MCF 10A (cell line): ENCODE measurements at regions of chr5 and their contacts with region 1.

Region 1: DNA sequence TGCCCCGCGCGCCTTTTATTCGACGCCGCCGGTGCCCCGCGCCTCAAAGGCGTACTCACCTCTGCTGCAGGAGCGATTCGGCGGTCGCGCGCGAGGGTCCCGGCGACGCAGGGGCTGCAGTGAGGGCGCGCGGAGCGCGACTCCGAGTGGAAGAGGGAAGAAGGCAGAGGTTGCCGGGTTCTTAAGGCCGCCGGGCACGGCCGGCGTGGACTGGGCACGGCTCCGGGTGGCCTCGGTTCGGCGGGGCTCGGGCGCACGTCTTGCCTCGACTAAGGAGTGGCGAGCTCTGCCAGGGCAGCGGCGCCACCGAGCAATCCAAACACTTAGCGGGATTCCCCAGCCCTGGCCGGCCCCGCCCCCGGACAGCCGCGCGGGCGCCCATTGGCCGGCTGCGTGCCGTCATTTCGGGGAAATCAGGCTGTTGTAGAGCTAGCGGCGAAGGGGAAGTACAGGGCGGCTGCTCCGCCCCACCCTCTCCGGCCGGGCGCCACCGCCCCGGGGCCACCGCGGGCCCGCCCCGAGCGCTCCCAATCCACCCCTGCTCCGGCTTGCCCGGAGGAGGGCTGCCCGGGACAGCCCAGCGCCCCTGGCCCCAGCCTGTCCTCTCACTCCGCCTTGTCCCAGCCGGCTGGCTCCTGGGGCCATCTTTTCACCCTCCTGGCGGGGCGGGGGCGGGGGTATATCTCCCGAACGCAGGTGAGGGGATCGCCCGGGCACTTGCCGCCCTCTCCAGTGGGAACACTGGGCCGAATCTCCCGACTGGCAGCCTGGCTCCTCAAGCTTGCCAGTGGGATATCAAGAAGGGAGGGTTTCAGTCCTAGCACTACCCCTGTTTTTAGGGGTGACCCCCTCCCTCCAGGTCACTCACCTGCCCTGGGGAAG is at the start of gene IRF1:
- DNase-seq: peak; percentile 99
- H3K4me3 Mint-ChIP-seq: peak within 1 kb of the TSS; percentile 87
- H3K27ac Mint-ChIP-seq: peak within 1 kb of the TSS; percentile 84
- H3K4me1 Mint-ChIP-seq: peaks cover 50% of the 10 kb centered on the region
- H3K27me3 Mint-ChIP-seq: no peaks in the 10 kb centered on the region
- CTCF ChIP-seq: peak; percentile 11
- total RNA-seq, gene IRF1: 18.7 and 23.0 TPM in 2 replicates

Region 2: GRCh38 chr5:131664929-131665328 is 825.8 kb before region 1 on chr5:
- CTCF ChIA-PET with region 1: no interaction called
- POLR2A ChIA-PET with region 1: no interaction called
- intact Hi-C with region 1: no loop called
- DNase-seq: no peak
- H3K4me3 Mint-ChIP-seq: no peak overlapping the region
- H3K27ac Mint-ChIP-seq: no peak overlapping the region
- H3K4me1 Mint-ChIP-seq: no peaks in the 10 kb centered on the region
- H3K27me3 Mint-ChIP-seq: no peaks in the 10 kb centered on the region
- CTCF ChIP-seq: no peak

Region 3: GRCh38 chr5:132369474-132370180 is 121.1 kb before region 1 on chr5 and contains the start of gene SLC22A5:
- CTCF ChIA-PET with region 1: interaction called, 33 read pairs
- POLR2A ChIA-PET with region 1: interaction called, 72 read pairs
- intact Hi-C with region 1: no loop called
- DNase-seq: peak; percentile 84
- H3K4me3 Mint-ChIP-seq: peak within 1 kb of the TSS; percentile 79
- H3K27ac Mint-ChIP-seq: peak within 1 kb of the TSS; percentile 39
- H3K4me1 Mint-ChIP-seq: peaks cover 44% of the 10 kb centered on the region
- H3K27me3 Mint-ChIP-seq: no peaks in the 10 kb centered on the region
- CTCF ChIP-seq: no peak
- total RNA-seq, gene SLC22A5: 122 and 167 TPM in 2 replicates

Region 4: GRCh38 chr5:132419502-132420468 is 70.9 kb before region 1 on chr5:
- CTCF ChIA-PET with region 1: interaction called, 89 read pairs
- POLR2A ChIA-PET with region 1: interaction called, 78 read pairs
- intact Hi-C with region 1: loop called (anchors 1 kb)
- DNase-seq: peak; percentile 87
- H3K4me3 Mint-ChIP-seq: no peak overlapping the region
- H3K27ac Mint-ChIP-seq: peak overlapping the region; percentile 17
- H3K4me1 Mint-ChIP-seq: peaks cover 35% of the 10 kb centered on the region
- H3K27me3 Mint-ChIP-seq: no peaks in the 10 kb centered on the region
- CTCF ChIP-seq: peak; percentile 97

Region 5: GRCh38 chr5:132456296-132457001 is 34.3 kb before region 1 on chr5:
- CTCF ChIA-PET with region 1: interaction called, 10 read pairs
- POLR2A ChIA-PET with region 1: interaction called, 26 read pairs
- intact Hi-C with region 1: no loop called
- DNase-seq: no peak
- H3K4me3 Mint-ChIP-seq: no peak overlapping the region
- H3K27ac Mint-ChIP-seq: peak overlapping the region; percentile 60
- H3K4me1 Mint-ChIP-seq: peaks cover 47% of the 10 kb centered on the region
- H3K27me3 Mint-ChIP-seq: no peaks in the 10 kb centered on the region
- CTCF ChIP-seq: no peak

Region 6: DNA sequence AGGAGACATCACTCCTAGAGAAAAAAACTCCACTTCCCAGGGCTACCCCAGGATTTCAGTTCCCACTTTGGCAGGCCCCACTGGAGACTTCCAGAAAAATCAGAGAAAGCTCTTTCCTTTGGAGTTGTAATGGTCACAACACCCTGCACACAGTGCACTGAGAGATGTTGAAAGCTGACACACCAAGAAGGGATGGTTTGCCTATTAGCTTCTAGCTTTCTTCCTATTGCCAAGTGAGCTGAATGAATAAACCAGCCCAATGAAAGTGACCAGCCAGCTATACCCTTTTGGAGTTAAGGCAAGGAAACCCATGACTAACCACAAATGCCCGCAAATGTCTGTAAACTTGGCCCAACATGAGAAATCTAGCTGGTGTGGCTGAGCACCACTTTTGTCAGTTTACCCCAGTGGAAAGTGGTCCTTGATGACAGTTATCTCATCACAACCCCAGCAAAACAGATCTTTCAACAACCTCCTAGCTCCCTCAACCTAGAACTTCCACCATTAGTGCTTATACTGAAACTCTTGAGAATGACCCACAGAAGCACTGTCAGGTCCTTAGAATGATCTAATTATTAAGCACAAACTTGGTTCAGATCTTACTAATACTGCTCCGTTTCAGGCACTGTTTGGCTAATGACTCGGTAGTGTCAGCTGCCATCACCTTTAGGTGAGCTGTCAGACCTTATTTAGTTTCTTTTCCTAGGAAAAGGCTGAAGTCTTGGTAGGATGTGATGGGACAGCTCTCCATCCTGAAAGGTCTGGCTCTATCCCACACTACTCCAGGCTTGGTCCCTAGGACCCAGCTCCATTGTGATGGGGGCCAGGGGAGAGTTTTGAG is 11.4 kb before region 1 on chr5:
- CTCF ChIA-PET with region 1: interaction called, 12 read pairs
- POLR2A ChIA-PET with region 1: interaction called, 47 read pairs
- intact Hi-C with region 1: no loop called
- DNase-seq: no peak
- H3K4me3 Mint-ChIP-seq: no peak overlapping the region
- H3K27ac Mint-ChIP-seq: no peak overlapping the region
- H3K4me1 Mint-ChIP-seq: no peaks in the 10 kb centered on the region
- H3K27me3 Mint-ChIP-seq: no peaks in the 10 kb centered on the region
- CTCF ChIP-seq: no peak